Mammary epithelial cell (primary cell): ENCODE measurements at regions of chr1 and their contacts with region 1.

Region 1: GRCh38 chr1:210262167-210262896 is 29.7 kb downstream of the SERTAD4 start:
- DNase-seq: peak; percentile 72
- H3K4me3 ChIP-seq: no peak overlapping the region
- H3K27ac ChIP-seq: peak overlapping the region; percentile 42
- H3K4me1 ChIP-seq: peaks cover 29% of the 10 kb centered on the region
- H3K27me3 ChIP-seq: no peaks in the 10 kb centered on the region
- CTCF ChIP-seq: no peak

Region 2: GRCh38 chr1:210239349-210240111 is 22.8 kb before region 1 on chr1:
- CTCF ChIA-PET with region 1: interaction called, 11 read pairs
- dilution Hi-C with region 1: no loop called
- in situ Hi-C with region 1: no loop called
- intact Hi-C with region 1: no loop called
- DNase-seq: peak; percentile 76
- H3K4me3 ChIP-seq: no peak overlapping the region
- H3K27ac ChIP-seq: no peak overlapping the region
- H3K4me1 ChIP-seq: peaks cover 12% of the 10 kb centered on the region
- H3K27me3 ChIP-seq: no peaks in the 10 kb centered on the region
- CTCF ChIP-seq: peak; percentile 58 to 67

Region 3: DNA sequence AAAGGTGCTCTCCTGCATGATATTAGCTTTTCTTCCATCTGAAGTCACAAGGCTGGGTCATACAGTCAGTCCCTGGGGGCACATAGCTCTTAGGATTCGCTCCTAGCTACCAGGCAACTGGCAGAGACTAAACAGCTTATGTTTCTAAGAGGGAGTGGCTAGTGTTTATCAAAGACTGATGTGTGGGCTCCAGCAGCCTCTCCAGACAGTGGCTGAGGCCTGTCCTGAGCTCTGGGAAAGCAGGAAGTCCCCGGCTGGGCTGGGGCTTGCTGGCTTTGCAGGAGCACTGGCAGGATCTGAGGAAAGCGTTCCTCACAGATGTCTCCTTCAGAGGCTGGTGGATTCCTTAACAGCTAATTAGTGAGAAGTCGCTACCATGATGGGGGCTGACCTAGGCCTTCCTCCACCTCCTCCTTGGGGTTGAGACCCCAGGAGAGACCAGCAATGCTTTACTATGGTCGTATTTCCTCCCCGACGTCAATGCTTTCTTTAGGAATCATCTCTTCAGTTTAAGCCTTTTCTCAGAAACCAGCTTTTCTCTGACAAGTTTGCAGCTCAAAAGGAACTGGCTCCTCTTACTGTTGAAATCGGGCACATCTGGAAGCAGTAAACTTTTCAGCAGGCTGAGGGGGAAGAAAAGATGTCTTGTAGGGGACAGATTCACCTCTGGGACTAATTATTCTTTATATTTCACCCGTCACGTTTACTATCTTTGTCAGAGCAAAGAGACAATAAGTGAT is 32.8 kb after region 1 on chr1:
- CTCF ChIA-PET with region 1: no interaction called
- dilution Hi-C with region 1: no loop called
- in situ Hi-C with region 1: no loop called
- intact Hi-C with region 1: loop called (anchors 5 kb)
- DNase-seq: peak; percentile 4
- H3K4me3 ChIP-seq: no peak overlapping the region
- H3K27ac ChIP-seq: no peak overlapping the region
- H3K4me1 ChIP-seq: peaks cover 25% of the 10 kb centered on the region
- H3K27me3 ChIP-seq: no peaks in the 10 kb centered on the region
- CTCF ChIP-seq: no peak

Region 4: GRCh38 chr1:210850556-210850955 is 588.2 kb after region 1 on chr1:
- CTCF ChIA-PET with region 1: no interaction called
- dilution Hi-C with region 1: no loop called
- in situ Hi-C with region 1: no loop called
- intact Hi-C with region 1: no loop called
- DNase-seq: no peak
- H3K4me3 ChIP-seq: no peak overlapping the region
- H3K27ac ChIP-seq: no peak overlapping the region
- H3K4me1 ChIP-seq: no peaks in the 10 kb centered on the region
- H3K27me3 ChIP-seq: no peaks in the 10 kb centered on the region
- CTCF ChIP-seq: no peak